Cardiac septum (tissue), 1 donor: ENCODE measurements at regions of chr18 and their contacts with region 1.

Region 1: DNA sequence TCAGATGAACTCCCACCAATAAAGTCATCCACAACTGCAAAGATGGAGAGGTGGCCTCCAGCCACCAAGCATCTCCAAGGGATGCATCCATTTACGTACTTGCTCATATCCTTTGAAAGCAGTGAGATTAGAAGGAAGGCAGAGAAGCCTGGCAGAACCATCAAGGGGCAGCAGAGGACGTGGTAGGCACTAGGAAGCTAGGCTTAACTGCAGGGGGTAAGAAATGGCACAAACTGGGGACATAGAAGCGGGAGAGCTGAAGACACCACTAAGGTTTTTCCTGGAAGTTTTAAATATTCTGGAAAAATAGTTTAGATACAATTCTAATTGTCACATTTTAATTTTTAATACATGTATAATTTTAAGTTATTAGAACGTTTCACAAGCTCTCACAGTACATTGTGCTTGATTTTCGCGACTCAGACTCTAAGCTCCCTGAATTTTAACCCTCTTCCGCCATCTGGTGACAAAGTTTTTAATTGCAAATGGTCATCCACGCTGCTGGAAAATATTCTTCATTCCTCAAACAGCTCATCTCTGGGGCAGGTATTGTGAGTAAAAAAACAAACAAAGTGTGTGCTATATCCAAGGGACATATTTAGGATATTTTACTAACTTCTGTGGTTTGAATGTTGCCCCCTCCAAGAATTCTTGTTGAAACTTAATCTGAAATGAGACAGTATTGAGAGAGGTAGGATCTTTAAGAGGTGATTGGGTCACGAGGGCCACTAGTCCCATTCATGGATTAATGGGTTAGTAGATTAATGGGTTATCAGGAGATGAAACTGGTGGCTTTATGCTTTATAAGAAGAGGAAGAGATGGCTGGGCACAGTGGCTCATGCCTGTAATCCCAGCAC is 1.6 kb upstream of the PSTPIP2 start:
- DNase-seq: no peak

Region 2: DNA sequence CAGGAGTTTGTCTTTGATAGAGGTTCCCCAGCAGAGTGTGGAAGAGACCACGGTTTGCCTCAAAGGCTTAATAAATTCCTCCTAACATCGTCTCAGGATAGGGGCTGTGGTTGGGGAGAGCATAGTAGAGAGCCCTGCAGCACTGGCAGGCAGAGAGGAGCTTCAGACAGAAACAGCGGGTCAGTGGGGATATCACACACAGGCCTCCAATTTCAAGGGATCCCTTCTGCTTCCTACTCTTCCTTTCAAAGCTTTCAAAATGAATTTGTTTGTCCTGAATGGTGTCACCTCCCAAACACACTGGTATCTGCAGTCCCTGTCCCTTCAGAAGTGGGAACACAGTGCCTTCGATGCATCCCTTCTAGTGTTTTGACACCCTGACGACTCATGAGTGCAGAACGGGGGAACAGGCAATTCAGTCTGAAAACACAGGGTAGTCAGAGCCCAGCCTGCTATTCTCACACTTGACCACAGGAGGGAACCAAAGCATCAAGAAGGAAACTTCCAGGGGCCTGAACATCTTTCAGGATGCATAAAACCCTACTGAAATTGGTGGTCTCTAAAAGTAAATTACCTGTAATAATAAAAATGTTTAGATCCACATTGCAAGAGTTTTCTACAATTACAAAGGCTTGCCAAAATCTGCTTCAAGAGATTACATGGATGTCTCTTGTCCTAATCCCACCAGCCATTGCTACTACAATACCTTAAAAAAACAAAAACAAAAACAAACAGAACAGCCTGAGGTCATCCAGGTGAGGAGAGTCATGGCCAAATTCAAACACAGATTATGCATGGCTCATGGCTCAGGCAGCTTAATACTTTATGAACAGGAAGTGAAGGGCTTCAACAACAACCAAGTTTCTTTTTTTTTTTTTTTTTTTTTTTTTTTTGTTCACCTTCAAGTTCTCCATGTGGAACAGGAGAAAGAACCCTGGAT is 408.6 kb before region 1 on chr18:
- intact Hi-C with region 1: loop called (anchors 10 kb)
- DNase-seq: no peak

Region 3: GRCh38 chr18:45863469-45863868 is 210.2 kb before region 1 on chr18:
- intact Hi-C with region 1: loop called (anchors 10 kb)
- DNase-seq: no peak

Region 4: GRCh38 chr18:45967007-45967706 is 106.5 kb before region 1 on chr18 and contains the start of gene EPG5:
- intact Hi-C with region 1: loop called (anchors 5 kb)
- DNase-seq: peak; percentile 98
- total RNA-seq, gene EPG5: 16.7 TPM